Esophagus squamous epithelium (tissue), 5 donors: ENCODE measurements at regions of chr1 and their contacts with region 1.

Region 1: DNA sequence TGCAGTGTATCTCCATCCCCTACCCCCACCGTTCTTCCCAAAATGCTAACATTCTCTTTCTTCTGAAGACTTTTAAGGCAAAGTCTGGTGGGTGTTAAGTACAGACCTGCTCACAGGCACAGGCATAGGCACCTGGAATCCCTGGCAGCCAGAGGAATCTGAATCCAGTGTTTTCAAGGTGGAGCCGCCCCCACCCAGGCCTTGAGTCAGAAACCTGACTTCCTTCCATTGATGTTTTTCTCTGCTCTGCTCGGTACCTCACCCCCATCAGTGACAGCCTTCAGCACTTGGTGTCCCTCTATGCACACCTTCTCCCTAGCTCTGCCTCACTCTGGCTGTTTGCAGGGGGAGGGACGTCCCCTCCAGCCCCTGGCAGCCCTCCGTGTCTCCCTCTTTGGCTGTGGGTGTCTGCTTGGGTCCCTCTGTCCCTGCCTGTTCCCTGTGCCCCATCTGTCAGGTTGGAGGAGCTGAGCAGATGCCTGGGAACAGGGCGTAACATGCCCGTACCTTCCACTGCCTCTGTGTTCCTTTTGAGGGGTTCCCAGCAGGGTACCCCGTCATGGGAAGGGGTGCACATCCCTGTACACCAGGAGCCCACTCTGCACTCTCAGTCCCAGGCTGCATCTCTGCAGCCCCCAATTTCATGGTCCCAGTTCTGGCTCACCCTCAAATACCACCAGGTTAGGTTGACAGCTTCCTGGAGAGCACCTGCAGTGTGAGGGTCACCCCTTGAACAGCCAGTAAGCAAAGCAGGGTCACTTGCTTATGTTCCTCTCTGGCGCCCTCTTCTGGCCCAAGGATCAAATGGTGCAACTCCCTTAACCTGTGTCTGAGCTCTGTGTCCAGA is 6.7 kb downstream of the NCDN start:
- DNase-seq: no peak
- H3K4me3 ChIP-seq: no peak overlapping the region
- H3K27ac ChIP-seq: no peak overlapping the region
- H3K4me1 ChIP-seq: peaks cover 7 to 42% (median 12%) of the 10 kb centered on the region in 3 donors
- H3K27me3 ChIP-seq: peaks cover 0 to 12% (median 0%) of the 10 kb centered on the region in 4 donors
- CTCF ChIP-seq: peak; percentile 64 to 80 (median 72)
- POLR2A ChIP-seq: no peak

Region 2: GRCh38 chr1:35369922-35370671 is 194.2 kb before region 1 on chr1:
- intact Hi-C with region 1: no loop called
- DNase-seq: no peak
- H3K4me3 ChIP-seq: no peak overlapping the region
- H3K27ac ChIP-seq: peak overlapping the region in 1 of 4 donors; percentile 17
- H3K4me1 ChIP-seq: peaks cover 0 to 7% (median 0%) of the 10 kb centered on the region in 3 donors
- H3K27me3 ChIP-seq: no peaks in the 10 kb centered on the region
- CTCF ChIP-seq: no peak
- POLR2A ChIP-seq: no peak

Region 3: GRCh38 chr1:35451125-35451528 is 113.1 kb before region 1 on chr1:
- intact Hi-C with region 1: loop called (anchors 5 kb)
- DNase-seq: no peak
- H3K4me3 ChIP-seq: no peak overlapping the region
- H3K27ac ChIP-seq: peak overlapping the region in 3 of 4 donors; percentile 48 to 80 (median 70)
- H3K4me1 ChIP-seq: peaks cover 20 to 58% (median 41%) of the 10 kb centered on the region in 3 donors
- H3K27me3 ChIP-seq: no peaks in the 10 kb centered on the region
- CTCF ChIP-seq: peak; percentile 58 to 89 (median 84)
- POLR2A ChIP-seq: no peak

Region 4: GRCh38 chr1:35461966-35462651 is 102.2 kb before region 1 on chr1:
- intact Hi-C with region 1: no loop called
- DNase-seq: no peak
- H3K4me3 ChIP-seq: no peak overlapping the region
- H3K27ac ChIP-seq: no peak overlapping the region
- H3K4me1 ChIP-seq: no peaks in the 10 kb centered on the region
- H3K27me3 ChIP-seq: no peaks in the 10 kb centered on the region
- CTCF ChIP-seq: no peak
- POLR2A ChIP-seq: no peak

Region 5: DNA sequence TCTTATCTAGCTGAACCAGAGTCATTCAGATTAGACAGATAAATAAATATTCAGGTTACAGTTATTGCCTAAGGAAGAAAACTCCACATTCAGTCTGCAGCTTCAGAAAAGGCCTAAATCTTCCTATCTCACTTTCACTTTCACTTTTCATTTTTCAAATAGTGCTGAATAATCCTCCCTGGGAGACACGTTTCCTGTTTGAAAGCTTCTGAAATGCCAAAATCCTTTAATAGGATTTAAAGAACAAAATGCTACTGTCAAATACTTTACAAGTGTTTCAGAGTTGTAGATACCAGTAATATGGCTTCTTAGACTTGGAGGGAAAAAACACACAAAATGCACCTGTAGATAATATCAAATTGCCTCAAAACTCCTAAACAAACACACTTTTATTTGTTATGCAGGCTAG is 73.1 kb after region 1 on chr1:
- intact Hi-C with region 1: loop called (anchors 10 kb)
- DNase-seq: no peak
- H3K4me3 ChIP-seq: peak overlapping the region in 3 of 4 donors; percentile 17 to 55 (median 34)
- H3K27ac ChIP-seq: peak overlapping the region; percentile 57 to 77 (median 69)
- H3K4me1 ChIP-seq: peaks cover 0 to 56% (median 36%) of the 10 kb centered on the region in 3 donors
- H3K27me3 ChIP-seq: no peaks in the 10 kb centered on the region
- CTCF ChIP-seq: no peak
- POLR2A ChIP-seq: no peak

Region 6: GRCh38 chr1:35769759-35770446 is 205.6 kb after region 1 on chr1 and contains the start of gene CLSPN:
- intact Hi-C with region 1: loop called (anchors 5 kb)
- DNase-seq: peak; percentile 61
- H3K4me3 ChIP-seq: peak within 1 kb of the TSS; percentile 60 to 91 (median 73)
- H3K27ac ChIP-seq: peak within 1 kb of the TSS; percentile 76 to 89 (median 84)
- H3K4me1 ChIP-seq: peaks cover 0 to 25% (median 5%) of the 10 kb centered on the region in 3 donors
- H3K27me3 ChIP-seq: no peaks in the 10 kb centered on the region
- CTCF ChIP-seq: no peak
- POLR2A ChIP-seq: peak in 2 of 4 donors; percentile 23 to 41
- total RNA-seq, gene CLSPN: 1.3 to 9.7 (median 4.4) TPM